SK-N-SH (cell line): ENCODE measurements at regions of chr16 and their contacts with region 1.

Region 1: GRCh38 chr16:11370084-11370931 is 25.0 kb downstream of the RMI2 start:
- DNase-seq: no peak
- H3K4me3 ChIP-seq: no peak overlapping the region
- H3K27ac ChIP-seq: no peak overlapping the region
- H3K4me1 ChIP-seq: no peaks in the 10 kb centered on the region
- H3K27me3 ChIP-seq: no peaks in the 10 kb centered on the region
- CTCF ChIP-seq: no peak
- EP300 ChIP-seq: no peak
- RAD21 ChIP-seq: no peak

Region 2: DNA sequence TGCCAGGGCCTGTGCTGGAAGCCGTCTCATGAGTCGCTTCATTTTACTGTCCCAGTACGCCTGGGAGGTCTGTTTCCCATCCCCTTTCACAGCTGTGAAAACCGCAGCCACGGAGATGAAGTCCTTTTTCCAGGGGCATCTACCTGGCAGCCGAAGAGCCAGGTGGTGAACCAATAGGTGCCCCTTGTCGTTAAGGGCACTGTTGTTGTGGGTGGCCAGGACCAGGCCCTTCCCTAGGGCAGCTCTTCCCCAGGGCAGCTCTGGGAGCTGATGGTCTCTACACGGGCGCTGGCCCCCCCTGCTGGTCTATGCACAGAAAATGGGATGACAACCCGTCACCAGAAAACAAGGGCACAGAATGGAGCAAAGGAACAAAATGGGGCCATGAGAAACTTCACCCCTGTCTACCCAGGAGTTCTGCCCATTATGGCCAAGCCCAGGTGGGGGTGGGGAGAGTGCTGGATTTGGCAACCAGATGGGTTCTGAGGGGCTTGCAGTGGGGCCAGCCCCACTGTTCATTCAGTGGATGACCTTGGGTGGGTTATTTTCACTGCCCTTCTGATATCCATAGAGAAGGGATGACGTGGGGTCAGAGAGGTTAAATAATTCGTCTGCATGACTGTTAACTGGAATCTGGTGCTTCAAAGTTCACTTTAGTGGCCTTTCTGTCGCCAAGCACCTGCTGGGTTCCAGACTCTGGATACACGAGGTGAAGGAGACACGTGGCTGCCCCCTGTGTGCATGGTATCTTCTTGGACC is 13.6 kb before region 1 on chr16:
- CTCF ChIA-PET with region 1: interaction called, 10 read pairs
- POLR2A ChIA-PET with region 1: no interaction called
- DNase-seq: peak; percentile 71
- H3K4me3 ChIP-seq: no peak overlapping the region; a peak in 1 of 4 replicates
- H3K27ac ChIP-seq: peak overlapping the region in 1 of 2 experiments; percentile 70; a peak in 2 of 4 replicates
- H3K4me1 ChIP-seq: peaks cover 15 to 26% of the 10 kb centered on the region in 2 experiments; a peak in 3 of 4 replicates
- H3K27me3 ChIP-seq: no peaks in the 10 kb centered on the region
- CTCF ChIP-seq: peak; percentile 69
- EP300 ChIP-seq: no peak
- RAD21 ChIP-seq: peak; percentile 74

Region 3: DNA sequence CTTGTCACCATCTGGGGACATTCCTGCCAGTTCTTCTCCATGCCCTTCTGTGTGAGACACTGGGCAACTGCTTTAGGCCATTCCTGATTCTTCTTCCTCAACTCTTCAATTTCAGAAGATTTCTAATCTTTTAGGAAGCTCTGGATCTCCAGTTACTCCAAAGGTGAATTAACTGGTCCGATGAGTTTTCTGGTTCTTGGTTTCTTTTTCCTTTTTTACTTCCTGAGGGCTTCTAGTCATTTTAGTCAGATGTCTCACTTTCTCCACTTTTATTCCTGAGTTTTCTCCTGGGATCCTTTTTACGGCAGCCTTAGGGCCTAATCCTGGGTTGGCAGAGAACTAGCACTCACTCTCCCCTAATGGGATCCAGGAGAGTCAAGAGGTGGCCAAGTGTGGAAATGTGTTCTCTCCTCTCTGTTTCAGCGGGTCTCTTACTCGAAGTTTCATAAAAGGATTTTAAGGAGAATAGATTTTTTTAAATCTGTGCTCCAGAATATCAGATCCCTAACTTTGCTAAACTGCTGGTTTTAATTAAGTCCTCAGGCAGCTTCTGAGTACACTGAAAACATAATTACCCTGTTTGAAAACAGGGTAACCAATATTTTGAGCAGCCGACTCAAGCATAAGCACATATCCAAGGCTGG is 82.6 kb after region 1 on chr16:
- CTCF ChIA-PET with region 1: no interaction called
- POLR2A ChIA-PET with region 1: no interaction called
- DNase-seq: no peak
- H3K4me3 ChIP-seq: no peak overlapping the region
- H3K27ac ChIP-seq: peak overlapping the region in 1 of 2 experiments; percentile 7; a peak in 1 of 4 replicates
- H3K4me1 ChIP-seq: peaks cover 0 to 7% of the 10 kb centered on the region in 2 experiments; a peak in 1 of 4 replicates
- H3K27me3 ChIP-seq: no peaks in the 10 kb centered on the region
- CTCF ChIP-seq: no peak
- EP300 ChIP-seq: no peak
- RAD21 ChIP-seq: no peak

Region 4: GRCh38 chr16:11526655-11527350 is 156.5 kb after region 1 on chr16:
- CTCF ChIA-PET with region 1: no interaction called
- POLR2A ChIA-PET with region 1: no interaction called
- DNase-seq: peak; percentile 72
- H3K4me3 ChIP-seq: no peak overlapping the region
- H3K27ac ChIP-seq: no peak overlapping the region
- H3K4me1 ChIP-seq: peaks cover 0 to 8% of the 10 kb centered on the region in 2 experiments; a peak in 1 of 4 replicates
- H3K27me3 ChIP-seq: no peaks in the 10 kb centered on the region; the same call in 1 of the 2 replicates
- CTCF ChIP-seq: no peak
- EP300 ChIP-seq: no peak
- RAD21 ChIP-seq: no peak